Naive thymus-derived CD4-positive, alpha-beta T cell (primary cell): ENCODE measurements at regions of chrX and their contacts with region 1.

Region 1: GRCh38 chrX:7996414-7996813 is 69.2 kb upstream of the PNPLA4 start:
- DNase-seq: peak in 4 of 9 donors; percentile 14 to 34 (median 29)
- ATAC-seq: no peak
- H3K4me3 ChIP-seq: no peak overlapping the region
- H3K4me3 Mint-ChIP-seq: no peak overlapping the region
- H3K27ac ChIP-seq: no peak overlapping the region
- H3K27ac Mint-ChIP-seq: no peak overlapping the region
- H3K4me1 ChIP-seq: no peaks in the 10 kb centered on the region
- H3K4me1 Mint-ChIP-seq: no peaks in the 10 kb centered on the region
- H3K27me3 ChIP-seq: no peaks in the 10 kb centered on the region
- H3K27me3 Mint-ChIP-seq: no peaks in the 10 kb centered on the region

Region 2: GRCh38 chrX:8743126-8743732 is 746.8 kb after region 1 on chrX:
- CTCF ChIA-PET with region 1: interaction called, 5 read pairs
- POLR2A ChIA-PET with region 1: no interaction called
- intact Hi-C with region 1: loop called (anchors 1 kb)
- DNase-seq: peak; percentile 23 to 68 (median 43)
- ATAC-seq: no peak
- H3K4me3 ChIP-seq: no peak overlapping the region
- H3K4me3 Mint-ChIP-seq: no peak overlapping the region
- H3K27ac ChIP-seq: no peak overlapping the region
- H3K27ac Mint-ChIP-seq: no peak overlapping the region
- H3K4me1 ChIP-seq: no peaks in the 10 kb centered on the region
- H3K4me1 Mint-ChIP-seq: no peaks in the 10 kb centered on the region
- H3K27me3 ChIP-seq: no peaks in the 10 kb centered on the region
- H3K27me3 Mint-ChIP-seq: peaks cover 0 to 6% (median 4%) of the 10 kb centered on the region in 5 donors

Region 3: DNA sequence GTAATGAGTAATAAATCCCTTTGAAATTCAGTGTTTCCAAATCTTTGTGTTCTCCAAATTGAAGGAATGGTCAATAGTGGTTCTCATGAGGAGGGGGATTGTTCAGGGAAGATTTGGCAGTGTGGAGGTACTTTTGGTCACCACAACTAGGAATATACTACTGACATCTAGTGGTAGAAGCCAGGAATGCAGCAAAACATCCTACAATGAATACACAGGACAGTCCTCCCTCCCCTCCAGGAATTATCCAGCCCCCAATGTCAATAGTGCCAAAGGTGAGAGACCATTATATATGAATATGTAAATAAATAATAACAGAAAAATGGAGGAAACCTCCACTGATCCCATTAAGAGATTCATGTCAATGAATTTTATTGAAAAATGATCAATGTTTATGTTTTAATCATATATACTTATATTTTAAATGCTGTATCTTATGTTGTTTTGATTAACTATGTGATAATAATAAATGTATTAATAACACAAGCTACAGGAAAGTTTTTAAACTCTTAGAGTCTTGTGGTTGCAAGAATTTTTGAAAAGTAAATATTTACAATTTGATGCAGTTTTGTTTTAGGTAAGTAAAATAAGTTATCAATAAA is 819.2 kb after region 1 on chrX:
- CTCF ChIA-PET with region 1: no interaction called
- POLR2A ChIA-PET with region 1: no interaction called
- intact Hi-C with region 1: loop called in 1 of 2 experiments (anchors 2 kb)
- DNase-seq: peak in 6 of 9 donors; percentile 7 to 44 (median 28)
- ATAC-seq: no peak
- H3K4me3 ChIP-seq: no peak overlapping the region
- H3K4me3 Mint-ChIP-seq: no peak overlapping the region
- H3K27ac ChIP-seq: no peak overlapping the region
- H3K27ac Mint-ChIP-seq: no peak overlapping the region
- H3K4me1 ChIP-seq: no peaks in the 10 kb centered on the region
- H3K4me1 Mint-ChIP-seq: no peaks in the 10 kb centered on the region
- H3K27me3 ChIP-seq: no peaks in the 10 kb centered on the region
- H3K27me3 Mint-ChIP-seq: peaks cover 0 to 9% (median 0%) of the 10 kb centered on the region in 5 donors